Ascending aorta (tissue), 2 donors: ENCODE measurements at regions of chr9 and their contacts with region 1.

Region 1: GRCh38 chr9:110864021-110864420 is 174.2 kb downstream of the LPAR1 start:
- DNase-seq: no peak
- H3K4me3 ChIP-seq: no peak overlapping the region
- H3K27ac ChIP-seq: peak overlapping the region; percentile 60 to 87
- H3K4me1 ChIP-seq: peaks cover 4 to 13% of the 10 kb centered on the region in 2 donors
- H3K27me3 ChIP-seq: no peaks in the 10 kb centered on the region
- CTCF ChIP-seq: no peak

Region 2: GRCh38 chr9:110842169-110842568 is 21.9 kb before region 1 on chr9:
- intact Hi-C with region 1: no loop called
- DNase-seq: no peak
- H3K4me3 ChIP-seq: no peak overlapping the region
- H3K27ac ChIP-seq: no peak overlapping the region
- H3K4me1 ChIP-seq: no peaks in the 10 kb centered on the region
- H3K27me3 ChIP-seq: no peaks in the 10 kb centered on the region
- CTCF ChIP-seq: no peak

Region 3: GRCh38 chr9:110895147-110895905 is 31.3 kb after region 1 on chr9:
- intact Hi-C with region 1: loop called (anchors 5 kb)
- DNase-seq: no peak
- H3K4me3 ChIP-seq: no peak overlapping the region
- H3K27ac ChIP-seq: peak overlapping the region; percentile 81 to 87
- H3K4me1 ChIP-seq: peaks cover 11 to 51% of the 10 kb centered on the region in 2 donors
- H3K27me3 ChIP-seq: no peaks in the 10 kb centered on the region
- CTCF ChIP-seq: no peak